ENCODE measurements at regions of chr13 and their contacts with region 1.

Region 1: DNA sequence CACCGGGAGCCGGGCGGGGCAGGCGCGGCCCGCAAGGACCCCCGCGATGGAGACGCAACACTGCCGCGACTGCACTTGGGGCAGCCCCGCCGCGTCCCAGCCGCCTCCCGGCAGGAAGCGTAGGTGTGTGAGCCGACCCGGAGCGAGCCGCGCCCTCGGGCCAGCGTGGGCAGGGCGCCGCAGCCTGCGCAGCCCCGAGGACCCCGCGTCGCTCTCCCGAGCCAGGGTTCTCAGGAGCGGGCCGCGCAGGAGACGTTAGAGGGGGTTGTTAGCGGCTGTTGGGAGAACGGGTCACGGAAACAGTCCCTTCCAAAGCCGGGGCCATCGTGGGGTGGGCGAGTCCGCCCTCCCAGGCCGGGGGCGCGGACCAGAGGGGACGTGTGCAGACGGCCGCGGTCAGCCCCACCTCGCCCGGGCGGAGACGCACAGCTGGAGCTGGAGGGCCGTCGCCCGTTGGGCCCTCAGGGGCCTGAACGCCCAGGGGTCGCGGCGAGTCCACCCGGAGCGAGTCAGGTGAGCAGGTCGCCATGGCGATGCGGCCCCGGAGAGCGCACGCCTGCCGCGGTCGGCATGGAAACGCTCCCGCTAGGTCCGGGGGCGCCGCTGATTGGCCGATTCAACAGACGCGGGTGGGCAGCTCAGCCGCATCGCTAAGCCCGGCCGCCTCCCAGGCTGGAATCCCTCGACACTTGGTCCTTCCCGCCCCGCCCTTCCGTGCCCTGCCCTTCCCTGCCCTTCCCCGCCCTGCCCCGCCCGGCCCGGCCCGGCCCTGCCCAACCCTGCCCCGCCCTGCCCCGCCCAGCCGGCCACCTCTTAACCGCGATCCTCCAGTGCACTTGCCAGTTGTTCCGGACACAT is at the start of gene CCNA1:
- DNase-seq: peak; percentile 28
- H3K4me3 Mint-ChIP-seq: peak within 1 kb of the TSS; percentile 46
- H3K27ac Mint-ChIP-seq: no peak within 1 kb of the TSS
- H3K4me1 Mint-ChIP-seq: peaks cover 15% of the 10 kb centered on the region
- H3K27me3 Mint-ChIP-seq: peaks cover 63% of the 10 kb centered on the region
- total RNA-seq, gene CCNA1: 0.17 to 0.59 TPM

Region 2: GRCh38 chr13:35470671-35471661 is 960.9 kb before region 1 on chr13:
- CTCF ChIA-PET with region 1: no interaction called
- intact Hi-C with region 1: loop called (anchors 5 kb)
- DNase-seq: no peak
- H3K4me3 Mint-ChIP-seq: no peak overlapping the region
- H3K27ac Mint-ChIP-seq: no peak overlapping the region
- H3K4me1 Mint-ChIP-seq: peaks cover 17% of the 10 kb centered on the region
- H3K27me3 Mint-ChIP-seq: peaks cover 63% of the 10 kb centered on the region

Region 3: DNA sequence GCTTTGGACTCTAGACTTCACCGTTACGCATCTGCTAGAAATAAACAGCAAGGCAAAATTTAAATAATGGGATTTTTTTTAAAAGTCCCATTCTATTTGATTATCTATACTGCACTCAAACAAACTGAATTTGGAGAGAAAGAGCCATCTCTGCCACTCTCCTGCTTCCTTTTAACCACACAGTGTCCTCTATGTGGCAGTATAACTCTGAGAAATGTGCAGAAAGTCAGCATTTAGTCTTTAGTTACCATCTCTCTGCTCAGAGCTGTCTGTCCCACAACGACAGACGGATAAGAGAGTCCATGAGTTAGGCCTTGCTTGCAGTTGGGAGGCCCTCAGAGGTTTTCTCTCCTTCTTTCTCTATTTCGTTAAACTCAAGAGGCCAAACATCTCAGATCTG is 21.6 kb after region 1 on chr13:
- CTCF ChIA-PET with region 1: no interaction called
- intact Hi-C with region 1: no loop called
- DNase-seq: no peak
- H3K4me3 Mint-ChIP-seq: no peak overlapping the region
- H3K27ac Mint-ChIP-seq: no peak overlapping the region
- H3K4me1 Mint-ChIP-seq: no peaks in the 10 kb centered on the region
- H3K27me3 Mint-ChIP-seq: peaks cover 21% of the 10 kb centered on the region